ENCODE measurements at regions of chr6 and their contacts with region 1.

Region 1: GRCh38 chr6:14144678-14145113 is 27.1 kb downstream of the CD83 start:
- DNase-seq: peak; percentile 80 to 94
- H3K4me3 ChIP-seq: no peak overlapping the region
- H3K4me1 ChIP-seq: peaks cover 12% of the 10 kb centered on the region
- H3K27me3 ChIP-seq: no peaks in the 10 kb centered on the region

Region 2: GRCh38 chr6:13908955-13909381 is 235.7 kb before region 1 on chr6:
- in situ Hi-C with region 1: loop called (anchors 10 kb)
- DNase-seq: peak; percentile 74 to 81
- H3K4me3 ChIP-seq: no peak overlapping the region
- H3K4me1 ChIP-seq: no peaks in the 10 kb centered on the region
- H3K27me3 ChIP-seq: peaks cover 21% of the 10 kb centered on the region

Measured in HAP-1 (cell line).